Activated CD4-positive, alpha-beta memory T cell treated with anti-CD3 and anti-CD28 coated beads for 36 hours (primary cell): ENCODE measurements at regions of chr5 and their contacts with region 1.

Region 1: DNA sequence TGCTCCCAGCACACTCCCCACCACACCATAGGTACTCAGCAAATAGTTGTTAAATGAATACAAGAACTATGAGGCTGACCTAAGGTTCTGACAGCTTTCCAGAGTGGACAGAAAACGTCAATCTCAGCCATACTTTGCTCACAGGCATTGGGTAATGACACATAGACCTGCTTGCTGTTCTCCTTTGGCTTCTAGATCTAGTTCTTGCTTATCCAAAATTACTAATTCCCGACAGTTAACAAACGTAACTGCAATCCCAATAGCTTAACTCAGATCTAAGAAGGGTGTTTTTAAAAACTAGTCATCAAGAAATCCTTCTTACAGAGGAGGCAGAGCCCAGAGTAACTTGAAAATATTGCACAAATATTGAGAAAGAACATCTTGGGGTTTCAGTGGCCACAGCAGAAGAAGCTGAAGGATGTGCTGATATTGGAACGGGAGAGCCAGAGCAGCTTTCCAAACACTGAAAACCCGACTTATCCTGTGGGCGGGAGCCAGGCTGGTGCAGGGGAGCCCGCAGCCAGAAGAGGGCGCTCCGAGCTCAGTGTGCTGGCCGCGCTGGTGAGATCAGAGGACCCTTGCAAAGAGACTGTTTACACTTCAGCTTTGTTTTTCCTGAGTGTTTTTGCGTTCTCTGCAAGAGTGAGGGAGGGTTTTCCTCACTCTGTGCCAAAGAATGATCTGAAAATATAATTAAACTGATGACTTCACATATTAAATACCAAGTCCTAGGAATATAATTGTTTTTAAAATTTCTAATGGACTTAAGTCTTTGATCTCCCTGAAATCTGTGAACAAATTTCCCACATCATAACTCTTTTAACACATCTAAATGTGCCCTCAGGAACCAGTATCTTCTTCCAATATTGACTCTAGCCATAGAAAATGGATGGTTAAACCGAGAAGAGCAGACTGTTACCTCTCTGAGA is 30.3 kb downstream of the FGF1 start:
- DNase-seq: peak; percentile 82
- H3K4me3 Mint-ChIP-seq: no peak overlapping the region
- H3K27ac Mint-ChIP-seq: no peak overlapping the region
- H3K4me1 Mint-ChIP-seq: no peaks in the 10 kb centered on the region
- H3K27me3 Mint-ChIP-seq: peaks cover 6% of the 10 kb centered on the region

Region 2: DNA sequence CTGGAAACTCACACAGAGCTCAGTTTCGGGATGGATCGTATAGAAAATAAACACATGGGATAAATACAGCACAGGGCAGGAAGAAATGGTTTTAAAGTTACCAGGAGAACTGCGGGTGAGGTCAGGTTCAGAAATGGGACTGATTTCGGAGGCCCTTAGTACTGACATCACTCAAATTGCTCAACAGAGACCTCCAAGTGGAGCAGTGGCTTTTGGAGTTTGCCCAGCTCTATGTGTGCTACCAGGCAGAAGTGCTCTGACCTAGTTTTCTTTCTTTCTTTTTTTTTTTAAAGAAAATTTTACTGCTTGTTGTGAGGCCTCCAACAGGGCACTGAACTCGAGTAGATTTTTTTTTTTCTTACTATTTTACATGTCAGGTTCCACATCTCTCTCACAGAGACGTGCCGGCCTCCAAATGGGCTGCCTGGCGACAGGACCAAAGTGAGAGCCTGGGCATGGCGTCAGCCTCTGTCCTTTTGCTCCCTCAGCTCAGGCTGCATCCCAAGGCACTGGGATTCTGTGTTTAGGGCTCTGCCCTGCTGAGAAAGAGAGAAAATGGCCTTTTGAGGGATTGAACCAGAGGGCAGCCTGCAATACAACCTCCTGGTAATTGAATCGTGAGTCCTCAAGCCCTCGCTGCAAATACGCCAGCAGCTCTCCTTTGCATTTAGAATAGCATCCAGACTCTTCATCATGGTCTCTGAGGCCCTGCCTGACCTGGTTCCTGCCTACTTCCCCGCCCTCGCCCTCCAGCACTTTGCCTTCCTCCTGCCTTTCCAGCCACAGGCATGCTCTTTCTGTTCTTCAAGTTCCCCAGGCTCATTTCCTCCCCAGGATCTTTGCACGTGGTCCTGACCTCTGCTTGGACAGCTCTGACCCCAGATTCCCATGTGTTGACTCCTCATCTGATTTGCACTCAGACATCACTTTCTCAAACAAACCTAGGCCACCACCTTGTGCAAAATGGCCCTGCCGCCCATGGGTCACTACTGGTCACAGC is 143.3 kb before region 1 on chr5:
- CTCF ChIA-PET with region 1: no interaction called
- POLR2A ChIA-PET with region 1: no interaction called
- intact Hi-C with region 1: no loop called
- DNase-seq: no peak
- H3K4me3 Mint-ChIP-seq: no peak overlapping the region
- H3K27ac Mint-ChIP-seq: no peak overlapping the region
- H3K4me1 Mint-ChIP-seq: peaks cover 28% of the 10 kb centered on the region
- H3K27me3 Mint-ChIP-seq: no peaks in the 10 kb centered on the region

Region 3: DNA sequence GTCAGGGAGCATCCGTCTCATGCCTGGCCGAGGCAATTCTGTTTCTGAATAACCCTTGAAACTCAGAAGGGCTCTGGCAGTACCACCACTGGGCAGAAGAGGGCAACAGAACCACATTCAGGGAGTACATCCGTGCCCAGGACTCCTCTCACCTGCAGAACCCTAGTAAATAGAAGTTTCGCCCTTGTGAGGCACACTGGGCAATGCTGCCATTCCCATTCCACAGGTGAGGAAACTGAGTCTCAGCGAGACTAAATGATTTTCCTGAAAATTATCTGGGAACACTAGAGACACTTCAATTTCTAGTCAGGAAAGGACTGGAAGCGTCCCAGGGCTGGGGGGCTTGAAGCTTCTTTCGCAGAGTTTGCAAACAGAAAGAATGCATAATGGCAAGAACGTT is 44.4 kb before region 1 on chr5:
- CTCF ChIA-PET with region 1: interaction called, 23 read pairs
- POLR2A ChIA-PET with region 1: no interaction called
- intact Hi-C with region 1: loop called (anchors 2 kb)
- DNase-seq: peak; percentile 85
- H3K4me3 Mint-ChIP-seq: no peak overlapping the region
- H3K27ac Mint-ChIP-seq: no peak overlapping the region
- H3K4me1 Mint-ChIP-seq: no peaks in the 10 kb centered on the region
- H3K27me3 Mint-ChIP-seq: peaks cover 15% of the 10 kb centered on the region

Region 4: GRCh38 chr5:142669477-142669876 is 13.9 kb after region 1 on chr5:
- CTCF ChIA-PET with region 1: interaction called, 18 read pairs
- POLR2A ChIA-PET with region 1: no interaction called
- intact Hi-C with region 1: no loop called
- DNase-seq: no peak
- H3K4me3 Mint-ChIP-seq: no peak overlapping the region
- H3K27ac Mint-ChIP-seq: no peak overlapping the region
- H3K4me1 Mint-ChIP-seq: no peaks in the 10 kb centered on the region
- H3K27me3 Mint-ChIP-seq: no peaks in the 10 kb centered on the region

Region 5: DNA sequence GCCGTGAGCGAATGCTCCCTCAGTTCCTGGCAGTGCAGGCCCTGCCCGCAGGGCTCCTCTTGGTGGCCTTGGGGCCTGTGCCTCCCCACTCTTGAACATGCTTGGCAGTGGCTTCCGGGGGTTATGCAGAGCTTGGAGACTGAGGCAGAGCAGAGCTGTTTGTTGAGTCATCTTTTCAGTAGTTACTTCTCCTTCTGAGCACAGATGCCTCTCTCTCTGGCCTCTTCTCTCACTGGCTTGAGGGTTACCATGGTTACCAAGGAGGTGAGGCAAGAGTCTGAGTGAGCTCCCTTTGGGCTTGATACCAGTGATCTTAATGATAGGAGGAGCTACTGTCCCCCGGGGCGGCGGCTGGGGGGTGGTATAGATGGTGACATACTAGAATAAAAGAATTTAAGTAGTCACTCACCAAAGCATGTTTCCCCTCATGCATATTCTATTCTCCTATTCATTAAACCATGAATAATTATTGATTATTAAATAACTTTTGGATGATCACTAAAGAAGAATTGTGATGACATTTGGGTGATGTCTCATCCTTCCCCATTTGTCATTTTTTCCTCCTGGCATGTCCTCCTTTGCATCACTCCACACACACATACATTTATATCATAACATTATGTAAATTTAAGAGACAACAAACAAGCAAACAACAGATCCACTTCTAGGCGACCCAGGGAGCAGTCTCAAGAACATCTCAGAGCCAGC is 225.6 kb after region 1 on chr5:
- CTCF ChIA-PET with region 1: interaction called, 8 read pairs
- POLR2A ChIA-PET with region 1: no interaction called
- intact Hi-C with region 1: loop called (anchors 5 kb)
- DNase-seq: no peak
- H3K4me3 Mint-ChIP-seq: no peak overlapping the region
- H3K27ac Mint-ChIP-seq: no peak overlapping the region
- H3K4me1 Mint-ChIP-seq: no peaks in the 10 kb centered on the region
- H3K27me3 Mint-ChIP-seq: no peaks in the 10 kb centered on the region

Region 6: GRCh38 chr5:142981886-142982820 is 326.6 kb after region 1 on chr5:
- CTCF ChIA-PET with region 1: no interaction called
- POLR2A ChIA-PET with region 1: no interaction called
- intact Hi-C with region 1: no loop called
- DNase-seq: no peak
- H3K4me3 Mint-ChIP-seq: no peak overlapping the region
- H3K27ac Mint-ChIP-seq: peak overlapping the region; percentile 64
- H3K4me1 Mint-ChIP-seq: peaks cover 61% of the 10 kb centered on the region
- H3K27me3 Mint-ChIP-seq: no peaks in the 10 kb centered on the region